Heart right ventricle (tissue), 16 donors: ENCODE measurements at regions of chr20 and their contacts with region 1.

Region 1: GRCh38 chr20:57089691-57090150 is 176.7 kb downstream of the BMP7 start:
- DNase-seq: peak; percentile 35 to 73
- ATAC-seq: peak; percentile 81 to 89 (median 84)
- H3K4me3 ChIP-seq: no peak overlapping the region
- H3K27ac ChIP-seq: no peak overlapping the region
- H3K4me1 ChIP-seq: peaks cover 0 to 5% (median 0%) of the 10 kb centered on the region in 9 donors
- H3K27me3 ChIP-seq: peaks cover 0 to 43% (median 13%) of the 10 kb centered on the region in 7 donors
- CTCF ChIP-seq: peak; percentile 72 to 96 (median 87)

Region 2: DNA sequence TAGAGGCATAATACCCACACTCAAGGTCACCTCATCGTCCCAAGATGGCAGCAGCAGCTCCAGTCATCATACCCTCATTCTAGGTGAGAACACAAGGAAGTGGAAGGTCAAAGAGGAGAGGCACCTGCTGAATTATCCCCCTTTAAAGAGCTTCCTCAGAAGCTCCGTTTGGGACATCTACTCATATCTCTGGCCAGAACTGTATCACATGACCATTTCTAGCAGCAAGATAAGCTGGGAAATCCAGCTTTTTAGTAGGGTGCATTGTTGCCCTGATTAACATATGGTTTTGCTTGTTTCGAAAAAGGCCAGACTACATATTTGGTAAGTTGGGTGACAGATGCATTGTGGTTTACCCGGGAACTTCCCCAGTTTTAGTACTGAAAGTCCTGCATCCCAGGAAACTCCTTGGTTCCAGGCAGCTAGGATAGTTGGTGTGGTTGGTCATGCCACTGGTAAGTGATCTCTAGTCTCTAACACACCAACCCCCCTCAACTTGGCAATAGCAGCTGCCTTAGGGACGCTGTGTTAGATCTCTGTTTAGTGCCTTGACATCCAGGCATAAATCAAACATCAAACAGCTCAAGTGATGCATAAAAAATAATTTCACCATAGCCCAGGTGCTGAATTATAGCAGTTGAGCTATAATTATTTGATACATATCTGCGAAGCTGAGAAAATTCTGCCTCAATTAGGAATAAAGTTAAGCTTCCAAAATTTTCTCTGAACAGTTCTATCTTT is 244.2 kb before region 1 on chr20:
- intact Hi-C with region 1: no loop called
- DNase-seq: no peak
- ATAC-seq: no peak
- H3K4me3 ChIP-seq: no peak overlapping the region
- H3K27ac ChIP-seq: no peak overlapping the region
- H3K4me1 ChIP-seq: no peaks in the 10 kb centered on the region
- H3K27me3 ChIP-seq: peaks cover 0 to 62% (median 20%) of the 10 kb centered on the region in 7 donors
- CTCF ChIP-seq: no peak

Region 3: GRCh38 chr20:57167971-57168706 is 78.4 kb after region 1 on chr20:
- intact Hi-C with region 1: loop called in 1 of 10 experiments (anchors 10 kb)
- DNase-seq: peak; percentile 36 to 42
- ATAC-seq: peak; percentile 67 to 91 (median 81)
- H3K4me3 ChIP-seq: no peak overlapping the region
- H3K27ac ChIP-seq: peak overlapping the region in 9 of 10 donors; percentile 51 to 82 (median 65)
- H3K4me1 ChIP-seq: peaks cover 0 to 12% (median 0%) of the 10 kb centered on the region in 9 donors
- H3K27me3 ChIP-seq: no peaks in the 10 kb centered on the region
- CTCF ChIP-seq: no peak

Region 4: DNA sequence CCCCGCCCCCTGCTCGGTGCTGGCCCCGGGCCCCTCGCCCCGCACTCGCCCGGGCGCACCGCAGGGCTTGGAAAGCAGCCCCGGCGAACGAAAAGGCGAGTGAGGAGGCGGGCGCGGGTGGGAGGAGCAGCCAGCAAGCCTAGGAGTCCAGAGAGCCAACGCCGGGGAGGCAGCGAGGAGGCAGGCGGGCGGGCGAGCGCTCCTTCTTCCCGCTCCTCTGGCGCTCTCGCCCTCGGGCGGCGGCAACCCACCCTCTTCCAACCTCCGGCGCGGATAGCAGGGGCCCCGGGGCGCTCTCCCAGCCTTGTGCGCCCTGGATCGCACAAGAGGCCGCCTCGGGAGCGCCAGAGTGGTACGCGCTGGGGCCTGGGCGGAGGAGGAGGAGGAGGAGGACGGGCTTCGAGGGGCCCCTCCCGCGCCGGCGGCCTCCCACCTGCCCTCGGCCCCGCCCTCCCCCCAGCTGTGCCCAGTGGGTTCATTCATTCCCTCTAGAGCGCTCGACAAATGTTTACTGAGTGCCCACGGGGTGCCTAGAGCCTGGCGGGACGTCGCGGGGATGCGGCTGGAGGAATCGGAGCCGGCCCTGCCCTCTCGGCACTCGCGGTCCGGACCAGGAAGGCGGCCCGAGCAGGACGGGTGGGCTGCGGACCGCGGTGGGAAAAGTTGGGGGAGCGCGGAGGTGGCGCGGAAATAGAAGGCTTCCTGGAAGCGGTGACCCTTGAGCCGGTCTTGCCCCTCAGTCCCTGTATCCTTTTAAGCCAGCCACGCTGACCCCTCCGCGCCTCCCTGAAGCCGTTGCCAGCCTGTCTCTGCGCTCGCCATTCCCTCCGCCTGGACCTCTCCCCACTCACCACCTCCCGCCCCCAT is 176.8 kb after region 1 on chr20 and contains the start of gene BMP7:
- intact Hi-C with region 1: loop called in 2 of 10 experiments (anchors 5 kb)
- DNase-seq: peak in 1 of 2 donors; percentile 16
- ATAC-seq: peak in 2 of 8 donors; percentile 34 to 59
- H3K4me3 ChIP-seq: peak within 1 kb of the TSS; percentile 0 to 41 (median 32)
- H3K27ac ChIP-seq: peak within 1 kb of the TSS in 1 of 10 donors; percentile 23
- H3K4me1 ChIP-seq: peaks cover 0 to 13% (median 4%) of the 10 kb centered on the region in 9 donors
- H3K27me3 ChIP-seq: peaks cover 23 to 97% (median 77%) of the 10 kb centered on the region in 7 donors
- CTCF ChIP-seq: no peak
- total RNA-seq, gene BMP7: 1.3 to 19.2 (median 4.7) TPM

Region 5: DNA sequence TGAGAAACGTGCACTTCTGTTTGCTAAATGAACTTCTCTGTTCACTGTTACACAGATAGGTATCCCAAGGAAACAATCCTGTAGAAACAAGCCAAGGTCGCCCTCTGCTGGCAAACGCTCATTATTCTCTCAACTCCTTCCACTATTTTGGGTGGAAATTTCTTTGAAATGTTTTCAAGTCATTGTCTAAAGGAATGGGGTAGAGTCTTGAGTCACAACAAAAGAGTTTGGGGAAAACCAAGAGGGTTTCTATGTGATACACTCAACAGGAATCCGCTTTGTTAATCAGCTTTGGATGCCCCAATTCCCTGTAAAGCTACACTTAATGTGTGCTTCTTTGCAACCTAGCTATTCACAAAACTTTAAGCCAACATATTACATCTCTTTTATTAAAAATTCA is 256.8 kb after region 1 on chr20:
- intact Hi-C with region 1: loop called (anchors 1 to 5 kb)
- DNase-seq: peak; percentile 62 to 69
- ATAC-seq: peak in 5 of 8 donors; percentile 44 to 59 (median 49)
- H3K4me3 ChIP-seq: no peak overlapping the region
- H3K27ac ChIP-seq: no peak overlapping the region
- H3K4me1 ChIP-seq: peaks cover 0 to 3% (median 0%) of the 10 kb centered on the region in 9 donors
- H3K27me3 ChIP-seq: peaks cover 0 to 44% (median 4%) of the 10 kb centered on the region in 7 donors
- CTCF ChIP-seq: peak; percentile 46 to 83 (median 79)

Region 6: DNA sequence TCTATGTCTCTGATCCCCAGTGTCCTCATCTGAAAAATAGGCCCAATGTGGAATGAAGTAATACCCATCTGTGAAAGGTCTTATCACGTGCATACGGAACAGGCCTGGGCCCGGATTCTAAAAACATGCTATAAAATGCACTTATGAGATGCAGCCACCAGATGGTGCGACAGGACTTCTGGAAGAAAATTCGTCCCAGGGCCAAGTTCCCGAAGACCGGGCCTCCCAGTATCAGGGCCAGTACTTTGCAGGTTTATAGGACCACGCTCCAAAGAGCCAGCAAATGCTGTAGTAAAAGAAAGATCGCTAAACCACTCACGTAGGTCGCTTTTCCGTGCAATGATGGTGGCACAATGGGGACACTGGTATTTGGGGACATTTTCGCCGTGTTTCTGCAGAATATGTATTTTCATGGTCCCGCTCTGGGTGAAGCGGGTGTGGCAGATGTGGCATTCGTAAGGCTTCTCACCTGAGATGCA is 424.6 kb after region 1 on chr20:
- intact Hi-C with region 1: loop called in 1 of 10 experiments (anchors 10 kb)
- DNase-seq: peak; percentile 31 to 72
- ATAC-seq: peak; percentile 70 to 87 (median 81)
- H3K4me3 ChIP-seq: no peak overlapping the region
- H3K27ac ChIP-seq: no peak overlapping the region
- H3K4me1 ChIP-seq: peaks cover 0 to 8% (median 0%) of the 10 kb centered on the region in 9 donors
- H3K27me3 ChIP-seq: peaks cover 0 to 31% (median 7%) of the 10 kb centered on the region in 7 donors
- CTCF ChIP-seq: peak; percentile 58 to 87 (median 78)